ENCODE measurements at regions of chr6 and their contacts with region 1.

Region 1: GRCh38 chr6:11251541-11252360 is 19.3 kb upstream of the NEDD9 start:
- DNase-seq: peak; percentile 71 to 89
- H3K4me3 ChIP-seq: no peak overlapping the region
- H3K27ac ChIP-seq: peak overlapping the region; percentile 84 to 92
- H3K4me1 ChIP-seq: peaks cover 7 to 16% of the 10 kb centered on the region in 2 donors
- H3K27me3 ChIP-seq: no peaks in the 10 kb centered on the region
- CTCF ChIP-seq: no peak
- POLR2A ChIP-seq: no peak

Region 2: DNA sequence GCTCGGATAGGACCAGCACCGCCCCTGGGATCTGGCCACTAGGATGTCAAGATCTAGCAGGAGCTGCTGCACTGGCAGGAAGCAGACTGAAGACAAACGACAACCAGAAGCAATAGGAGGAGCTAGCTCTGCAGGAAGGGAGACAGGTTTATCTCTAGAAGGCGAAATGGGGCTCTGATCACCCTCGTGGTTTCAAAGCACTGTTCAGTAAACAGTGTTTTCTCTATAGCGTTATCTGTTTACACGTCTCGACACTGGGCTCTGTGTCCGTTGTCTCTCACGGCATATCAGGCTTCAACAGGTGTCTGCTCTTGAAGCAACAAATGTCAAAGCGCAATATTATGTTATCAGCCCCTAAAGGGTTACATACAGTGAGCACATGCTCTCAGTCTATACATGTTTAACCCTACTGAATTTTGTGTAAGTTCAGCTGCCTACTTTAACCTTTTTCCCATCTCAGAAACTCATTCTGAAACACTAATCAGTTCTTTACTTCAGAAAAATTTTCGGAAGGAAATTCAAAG is 480.3 kb before region 1 on chr6:
- intact Hi-C with region 1: no loop called
- DNase-seq: no peak
- H3K4me3 ChIP-seq: no peak overlapping the region
- H3K27ac ChIP-seq: no peak overlapping the region
- H3K4me1 ChIP-seq: no peaks in the 10 kb centered on the region
- H3K27me3 ChIP-seq: no peaks in the 10 kb centered on the region
- CTCF ChIP-seq: no peak
- POLR2A ChIP-seq: no peak

Region 3: GRCh38 chr6:11120271-11121005 is 131.3 kb before region 1 on chr6:
- intact Hi-C with region 1: no loop called
- DNase-seq: no peak
- H3K4me3 ChIP-seq: no peak overlapping the region
- H3K27ac ChIP-seq: no peak overlapping the region
- H3K4me1 ChIP-seq: no peaks in the 10 kb centered on the region
- H3K27me3 ChIP-seq: no peaks in the 10 kb centered on the region
- CTCF ChIP-seq: no peak
- POLR2A ChIP-seq: no peak

Region 4: DNA sequence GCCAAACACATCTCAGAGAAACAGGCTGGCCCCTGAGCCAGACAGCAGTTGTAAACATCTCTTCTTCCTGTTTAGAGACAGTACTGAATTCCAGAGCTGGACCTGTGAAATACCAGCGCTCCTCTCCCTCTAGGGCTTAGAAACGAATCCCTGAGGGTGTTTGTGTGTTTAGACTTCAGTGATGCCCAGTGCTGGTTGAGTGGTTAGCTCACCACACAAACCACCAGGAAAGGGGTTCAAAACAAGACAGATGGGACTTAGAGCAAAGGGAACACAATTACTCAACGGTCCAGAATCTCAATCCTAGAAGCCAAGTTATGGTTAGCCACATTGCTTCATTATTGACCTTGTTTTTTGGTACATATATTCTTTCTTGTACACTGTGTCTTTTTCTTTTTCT is 177.1 kb after region 1 on chr6:
- intact Hi-C with region 1: loop called (anchors 10 kb)
- DNase-seq: no peak
- H3K4me3 ChIP-seq: no peak overlapping the region
- H3K27ac ChIP-seq: peak overlapping the region; percentile 59 to 74
- H3K4me1 ChIP-seq: peaks cover 0 to 8% of the 10 kb centered on the region in 2 donors
- H3K27me3 ChIP-seq: no peaks in the 10 kb centered on the region
- CTCF ChIP-seq: no peak
- POLR2A ChIP-seq: no peak